Mucosa of descending colon (tissue), 3 donors: ENCODE measurements at regions of chr13 and their contacts with region 1.

Region 1: GRCh38 chr13:51583875-51584730 is at the start of gene WDFY2:
- DNase-seq: peak; percentile 100
- ATAC-seq: peak; percentile 94
- H3K4me3 ChIP-seq: peak within 1 kb of the TSS; percentile 62
- H3K4me1 ChIP-seq: peaks cover 9% of the 10 kb centered on the region
- CTCF ChIP-seq: no peak
- total RNA-seq, gene WDFY2: 3.4 to 9.6 (median 6.6) TPM

Region 2: GRCh38 chr13:51452361-51453206 is 131.5 kb before region 1 on chr13 and contains the start of gene INTS6:
- intact Hi-C with region 1: loop called (anchors 10 kb)
- DNase-seq: peak; percentile 99
- ATAC-seq: peak; percentile 86
- H3K4me3 ChIP-seq: peak within 1 kb of the TSS; percentile 89
- H3K4me1 ChIP-seq: peaks cover 13% of the 10 kb centered on the region
- CTCF ChIP-seq: no peak
- total RNA-seq, gene INTS6: 32.0 to 38.4 (median 36.3) TPM

Region 3: GRCh38 chr13:51861723-51862300 is 277.7 kb after region 1 on chr13 and contains the start of gene CCDC70:
- intact Hi-C with region 1: no loop called
- DNase-seq: no peak
- ATAC-seq: no peak
- H3K4me3 ChIP-seq: no peak within 1 kb of the TSS
- H3K4me1 ChIP-seq: no peaks in the 10 kb centered on the region
- CTCF ChIP-seq: no peak
- total RNA-seq, gene CCDC70: not detected